ENCODE measurements at regions of chr17 and their contacts with region 1.

Region 1: DNA sequence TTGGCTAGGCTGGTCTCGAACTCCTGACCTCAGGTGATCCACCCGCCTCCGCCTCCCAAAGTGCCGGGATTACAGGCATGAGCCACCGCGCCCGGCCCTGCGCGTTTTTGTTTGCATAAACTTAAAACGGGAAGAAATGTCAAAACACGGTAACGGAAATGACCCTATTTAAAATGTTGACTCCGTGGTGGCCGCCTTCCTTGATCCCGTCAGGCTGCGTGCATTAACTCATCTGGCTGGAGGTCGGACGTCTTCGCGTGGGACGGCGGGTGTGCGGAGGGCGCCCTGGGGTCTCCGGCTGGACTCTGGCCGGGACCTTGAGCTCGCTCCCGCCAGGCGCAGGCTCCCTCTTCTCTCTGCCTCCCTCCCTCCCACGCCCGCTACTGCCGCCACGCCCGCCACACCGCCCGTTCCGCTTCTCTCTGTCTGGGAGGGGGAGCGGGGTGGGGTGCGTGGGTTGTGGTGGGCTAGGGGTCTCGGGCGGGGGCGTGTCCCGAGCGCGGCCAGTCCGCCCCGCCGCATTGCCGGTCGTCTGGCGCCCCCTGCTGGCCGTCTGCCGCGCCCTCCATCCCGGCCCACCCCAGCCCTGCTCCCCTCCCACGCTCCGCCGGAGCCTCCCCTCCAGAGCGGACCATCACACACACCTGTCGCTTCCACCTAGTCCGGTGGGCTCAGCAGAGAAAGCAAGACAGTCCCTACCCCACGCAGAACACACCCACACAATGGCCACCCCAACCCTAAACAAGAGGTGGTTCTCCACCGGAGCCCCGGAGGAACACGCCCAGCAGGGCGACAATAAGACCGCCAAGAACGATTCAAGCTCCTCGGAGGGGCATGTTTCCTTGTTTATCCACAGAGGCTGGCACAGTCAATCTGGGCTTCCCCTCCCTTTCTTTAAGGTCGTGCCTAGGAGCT is 1.2 kb upstream of the CCDC42 start:
- DNase-seq: peak; percentile 76
- ATAC-seq: peak; percentile 83
- H3K4me3 Mint-ChIP-seq: peak overlapping the region; percentile 93
- H3K27ac Mint-ChIP-seq: no peak overlapping the region
- H3K4me1 Mint-ChIP-seq: peaks cover 4% of the 10 kb centered on the region; the same call in 1 of the 2 replicates
- H3K27me3 Mint-ChIP-seq: no peaks in the 10 kb centered on the region; the same call in 1 of the 2 replicates
- CTCF ChIP-seq: peak; percentile 99

Region 2: GRCh38 chr17:8630802-8631553 is 114.9 kb before region 1 on chr17:
- CTCF ChIA-PET with region 1: interaction called, 21 read pairs
- POLR2A ChIA-PET with region 1: interaction called, 5 read pairs
- DNase-seq: peak; percentile 99
- ATAC-seq: peak; percentile 93
- H3K4me3 Mint-ChIP-seq: peak overlapping the region; percentile 97
- H3K27ac Mint-ChIP-seq: peak overlapping the region; percentile 92
- H3K4me1 Mint-ChIP-seq: peaks cover 26% of the 10 kb centered on the region
- H3K27me3 Mint-ChIP-seq: no peaks in the 10 kb centered on the region
- CTCF ChIP-seq: peak; percentile 18; the same call in 1 of the 2 replicates